Activated CD4-positive, alpha-beta T cell treated with anti-CD3 and anti-CD28 coated beads for 36 hours (primary cell): ENCODE measurements at regions of chr15 and their contacts with region 1.

Region 1: DNA sequence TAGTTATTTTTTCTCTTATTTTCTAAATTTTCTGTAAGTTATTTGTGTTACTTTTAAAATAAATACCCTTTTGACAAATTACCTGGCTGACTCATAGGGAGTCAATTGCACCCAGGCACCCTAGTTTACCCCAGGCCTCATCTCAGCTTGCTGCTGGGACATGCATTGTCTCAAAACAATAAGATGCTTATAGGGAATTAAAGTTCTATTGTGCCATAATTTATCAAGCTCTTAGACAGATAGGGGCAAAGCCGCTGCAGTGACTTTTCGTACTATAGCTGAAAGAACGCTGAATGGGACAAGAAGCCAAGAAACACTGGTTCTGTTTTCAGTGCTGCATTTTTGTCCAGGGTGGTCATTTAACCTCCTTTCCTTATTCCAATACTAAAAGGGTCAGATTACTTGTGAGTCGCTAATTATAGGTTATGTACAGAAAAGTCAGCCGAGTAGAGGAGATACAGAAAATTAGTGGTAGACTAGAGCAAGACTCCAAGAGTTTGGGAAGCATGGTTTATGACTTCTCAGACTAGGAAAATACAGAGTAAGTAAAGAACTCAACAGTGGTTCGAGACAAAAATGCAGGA is 50.3 kb downstream of the EXD1 start:
- DNase-seq: no peak
- ATAC-seq: no peak
- H3K4me3 Mint-ChIP-seq: no peak overlapping the region
- H3K27ac Mint-ChIP-seq: no peak overlapping the region
- H3K4me1 Mint-ChIP-seq: no peaks in the 10 kb centered on the region
- H3K27me3 Mint-ChIP-seq: no peaks in the 10 kb centered on the region

Region 2: GRCh38 chr15:41022487-41023090 is 157.7 kb before region 1 on chr15:
- CTCF ChIA-PET with region 1: interaction called, 4 read pairs
- POLR2A ChIA-PET with region 1: no interaction called
- intact Hi-C with region 1: loop called in 1 of 2 experiments (anchors 10 kb)
- DNase-seq: peak; percentile 54
- ATAC-seq: peak; percentile 80
- H3K4me3 Mint-ChIP-seq: no peak overlapping the region
- H3K27ac Mint-ChIP-seq: no peak overlapping the region
- H3K4me1 Mint-ChIP-seq: peaks cover 2% of the 10 kb centered on the region
- H3K27me3 Mint-ChIP-seq: no peaks in the 10 kb centered on the region